ENCODE measurements at regions of chr11 and their contacts with region 1.

Region 1: DNA sequence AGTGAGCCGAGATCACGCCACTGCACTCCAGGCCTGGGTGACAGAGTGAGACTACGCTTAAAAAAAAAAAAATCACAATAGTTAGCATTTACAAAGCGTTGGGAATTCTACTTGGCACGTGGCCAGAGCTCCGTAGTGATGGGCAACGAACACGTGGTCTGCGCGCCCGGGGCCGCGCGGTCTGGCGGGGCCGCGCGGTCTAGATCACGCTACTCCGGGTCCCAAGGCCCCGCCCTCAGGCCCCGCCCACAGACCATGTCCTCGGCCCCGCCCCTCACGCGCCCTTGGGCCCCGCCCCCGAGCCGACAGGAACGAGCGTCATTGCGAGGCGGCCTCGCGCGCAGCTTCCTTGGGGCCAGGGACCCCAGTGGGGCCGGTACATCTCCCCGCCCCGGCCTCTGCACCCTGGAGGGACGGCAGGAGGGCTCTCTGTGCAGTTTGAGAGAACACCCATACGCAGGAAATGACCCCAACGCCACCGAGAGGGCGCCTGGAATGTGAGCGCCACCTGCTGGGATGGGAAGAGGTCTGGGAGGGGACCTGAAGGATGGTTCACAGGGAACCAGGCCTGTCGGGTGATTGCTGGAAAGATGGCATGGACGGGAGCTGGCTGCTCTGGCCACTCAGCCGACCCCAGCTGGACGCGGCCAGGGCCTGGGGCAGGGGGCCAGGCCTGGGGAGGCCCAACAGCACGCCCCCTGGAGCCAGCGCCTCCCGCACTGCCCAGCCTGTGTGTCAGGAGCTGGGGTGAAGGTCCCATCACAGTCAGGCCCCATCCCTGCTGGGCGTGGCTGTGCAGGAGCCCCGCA is 2.0 kb upstream of the PTDSS2 start:
- DNase-seq: peak; percentile 97
- H3K4me3 ChIP-seq: peak overlapping the region; percentile 49 to 62 (median 62)
- H3K27ac ChIP-seq: peak overlapping the region; percentile 91 to 94 (median 93)
- H3K4me1 ChIP-seq: peaks cover 0 to 39% (median 33%) of the 10 kb centered on the region in 4 donors
- H3K27me3 ChIP-seq: peaks cover 0 to 17% (median 0%) of the 10 kb centered on the region in 3 donors
- CTCF ChIP-seq: peak; percentile 61 to 94 (median 80)
- EP300 ChIP-seq: peak in 1 of 4 donors; percentile 19
- POLR2A ChIP-seq: peak; percentile 79 to 82

Region 2: DNA sequence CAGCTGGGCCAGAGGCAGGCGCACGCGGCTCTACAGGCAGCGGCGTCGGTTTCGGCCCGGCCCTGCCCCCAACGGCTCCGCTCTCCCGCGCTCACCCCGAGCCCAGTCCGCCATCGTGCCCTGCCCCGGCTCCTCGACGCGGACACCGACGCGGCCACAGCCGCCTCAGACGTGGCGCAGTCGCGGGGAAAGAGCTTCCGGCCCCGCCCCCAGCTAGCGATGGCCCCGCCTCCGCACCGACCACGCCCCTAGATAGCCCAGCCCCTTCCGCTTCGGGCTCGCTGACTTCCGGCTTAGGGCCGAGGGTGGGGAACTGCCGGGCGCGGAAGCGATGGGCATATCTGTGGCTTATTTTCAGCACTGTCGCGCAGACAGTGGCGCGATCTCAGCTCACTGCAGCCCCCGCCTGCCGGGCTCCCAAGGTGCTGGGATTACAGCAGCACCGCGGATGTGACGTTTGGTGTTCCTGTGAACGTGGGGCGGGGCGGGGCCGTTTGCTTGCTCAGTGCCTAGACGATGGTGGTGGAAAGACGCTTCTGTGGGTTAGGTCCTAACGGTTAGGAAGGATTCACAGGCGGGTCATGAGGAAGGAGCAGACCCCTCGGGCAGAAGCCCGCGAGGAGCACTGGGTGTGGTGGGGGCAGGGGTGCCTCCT is 240.8 kb before region 1 on chr11 and contains the starts of genes BET1L and RIC8A:
- intact Hi-C with region 1: loop called (anchors 2 kb)
- DNase-seq: peak; percentile 99
- H3K4me3 ChIP-seq: peak within 1 kb of the TSS; percentile 85 to 98 (median 90)
- H3K27ac ChIP-seq: peak within 1 kb of the TSS; percentile 96 to 100 (median 98)
- H3K4me1 ChIP-seq: peaks cover 0 to 64% (median 47%) of the 10 kb centered on the region in 4 donors
- H3K27me3 ChIP-seq: no peaks in the 10 kb centered on the region
- CTCF ChIP-seq: no peak
- EP300 ChIP-seq: peak in 1 of 4 donors; percentile 65
- POLR2A ChIP-seq: peak; percentile 92 to 97
- total RNA-seq, gene BET1L: 22.8 to 29.6 (median 23.8) TPM
- total RNA-seq, gene RIC8A: 73.7 to 103 (median 86.8) TPM

Region 3: GRCh38 chr11:304915-305843 is 142.9 kb before region 1 on chr11:
- intact Hi-C with region 1: loop called (anchors 5 kb)
- DNase-seq: peak; percentile 90
- H3K4me3 ChIP-seq: no peak overlapping the region
- H3K27ac ChIP-seq: peak overlapping the region in 3 of 4 donors; percentile 14 to 86 (median 19)
- H3K4me1 ChIP-seq: peaks cover 0 to 44% (median 15%) of the 10 kb centered on the region in 4 donors
- H3K27me3 ChIP-seq: peaks cover under 1 to 12% (median 3%) of the 10 kb centered on the region in 3 donors
- CTCF ChIP-seq: peak; percentile 64 to 80 (median 74)
- EP300 ChIP-seq: no peak
- POLR2A ChIP-seq: no peak

Region 4: GRCh38 chr11:406978-407739 is 41.0 kb before region 1 on chr11:
- intact Hi-C with region 1: loop called (anchors 1 kb)
- DNase-seq: peak; percentile 91
- H3K4me3 ChIP-seq: peak overlapping the region; percentile 56 to 79 (median 62)
- H3K27ac ChIP-seq: peak overlapping the region; percentile 70 to 77 (median 74)
- H3K4me1 ChIP-seq: peaks cover 0 to 20% (median 19%) of the 10 kb centered on the region in 4 donors
- H3K27me3 ChIP-seq: peaks cover 0 to 8% (median 7%) of the 10 kb centered on the region in 3 donors
- CTCF ChIP-seq: no peak
- EP300 ChIP-seq: no peak
- POLR2A ChIP-seq: no peak

Region 5: GRCh38 chr11:506238-506994 is 58.3 kb after region 1 on chr11:
- intact Hi-C with region 1: loop called (anchors 2 kb)
- DNase-seq: peak; percentile 99
- H3K4me3 ChIP-seq: peak overlapping the region; percentile 70 to 94 (median 92)
- H3K27ac ChIP-seq: peak overlapping the region; percentile 97 to 100 (median 99)
- H3K4me1 ChIP-seq: peaks cover 0 to 54% (median 48%) of the 10 kb centered on the region in 4 donors
- H3K27me3 ChIP-seq: no peaks in the 10 kb centered on the region
- CTCF ChIP-seq: no peak
- EP300 ChIP-seq: peak in 2 of 4 donors; percentile 77 to 82
- POLR2A ChIP-seq: peak in 1 of 2 donors; percentile 59

Region 6: GRCh38 chr11:528815-529599 is 80.9 kb after region 1 on chr11:
- intact Hi-C with region 1: no loop called
- DNase-seq: no peak
- H3K4me3 ChIP-seq: no peak overlapping the region
- H3K27ac ChIP-seq: no peak overlapping the region
- H3K4me1 ChIP-seq: peaks cover 0 to 9% (median 5%) of the 10 kb centered on the region in 4 donors
- H3K27me3 ChIP-seq: no peaks in the 10 kb centered on the region
- CTCF ChIP-seq: no peak
- EP300 ChIP-seq: no peak
- POLR2A ChIP-seq: no peak

Region 7: DNA sequence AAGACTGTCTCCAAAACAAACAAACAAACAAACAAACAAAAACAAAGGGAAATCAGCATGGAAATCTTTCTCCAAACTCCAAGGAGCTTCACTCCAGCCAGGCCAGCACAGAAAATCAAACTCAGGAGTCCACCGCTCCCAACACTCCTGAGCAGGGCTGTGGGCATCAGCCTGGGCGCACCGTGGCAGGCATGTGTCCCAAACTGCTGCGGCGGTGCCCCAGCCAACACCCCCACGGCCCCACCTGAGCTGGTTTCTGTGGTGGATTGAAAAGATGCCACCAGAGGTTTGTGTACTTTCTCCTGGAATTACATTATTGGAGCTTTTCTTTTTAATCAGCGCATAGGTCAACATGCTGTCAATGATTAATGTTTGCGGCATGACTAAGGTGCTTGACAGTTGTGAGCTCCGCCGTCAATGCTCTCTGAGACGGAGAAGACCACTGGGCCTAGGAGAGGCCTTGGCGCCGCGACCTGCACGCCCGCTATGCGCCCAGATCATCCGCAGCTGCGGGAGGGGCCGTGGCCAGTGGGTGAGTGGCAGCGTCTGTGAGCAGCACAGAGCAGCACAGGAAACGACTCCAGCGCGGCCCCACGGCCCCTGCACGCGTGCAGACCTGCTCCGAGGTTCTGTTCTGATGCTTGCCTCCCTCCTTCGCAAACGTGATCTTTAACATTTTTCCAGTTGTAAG is 207.1 kb after region 1 on chr11:
- intact Hi-C with region 1: no loop called
- DNase-seq: no peak
- H3K4me3 ChIP-seq: no peak overlapping the region
- H3K27ac ChIP-seq: no peak overlapping the region
- H3K4me1 ChIP-seq: no peaks in the 10 kb centered on the region
- H3K27me3 ChIP-seq: no peaks in the 10 kb centered on the region
- CTCF ChIP-seq: no peak
- EP300 ChIP-seq: no peak
- POLR2A ChIP-seq: no peak

Region 8: DNA sequence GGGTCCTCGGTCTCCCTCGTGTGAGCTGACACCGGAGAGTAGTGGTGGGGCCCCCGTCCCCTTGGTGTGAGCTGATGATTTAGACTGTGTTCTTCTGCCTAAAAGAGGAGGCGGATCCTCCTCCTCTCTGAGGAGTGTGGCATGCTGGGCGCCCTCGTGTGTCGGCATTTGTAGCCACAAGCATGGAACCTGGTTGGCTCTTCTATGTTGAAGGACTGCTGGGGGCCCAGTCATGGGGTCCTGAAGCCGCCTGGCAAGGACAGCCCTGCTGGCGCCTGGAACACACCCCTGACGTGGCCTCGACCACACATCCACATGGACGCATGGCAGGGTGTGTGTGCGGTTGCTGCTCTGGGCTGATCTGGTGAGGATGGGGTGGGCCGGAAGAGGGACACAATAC is 527.7 kb after region 1 on chr11:
- intact Hi-C with region 1: no loop called
- DNase-seq: no peak
- H3K4me3 ChIP-seq: no peak overlapping the region
- H3K27ac ChIP-seq: no peak overlapping the region
- H3K4me1 ChIP-seq: peaks cover 0 to 5% (median 0%) of the 10 kb centered on the region in 4 donors
- H3K27me3 ChIP-seq: no peaks in the 10 kb centered on the region
- CTCF ChIP-seq: no peak
- EP300 ChIP-seq: no peak
- POLR2A ChIP-seq: no peak

Measured in sigmoid colon (tissue), 7 donors.